ENCODE measurements at regions of chr20 and their contacts with region 1.

Region 1: GRCh38 chr20:48550610-48551195 is 277.1 kb downstream of the PREX1 start:
- DNase-seq: no peak
- H3K4me3 ChIP-seq: no peak overlapping the region
- CTCF ChIP-seq: no peak
- POLR2A ChIP-seq: no peak

Region 2: GRCh38 chr20:47821481-47822439 is 728.9 kb before region 1 on chr20:
- intact Hi-C with region 1: loop called (anchors 5 kb)
- DNase-seq: no peak
- H3K4me3 ChIP-seq: no peak overlapping the region
- CTCF ChIP-seq: no peak
- POLR2A ChIP-seq: no peak

Region 3: GRCh38 chr20:49288784-49289696 is 738.3 kb after region 1 on chr20:
- intact Hi-C with region 1: no loop called
- DNase-seq: no peak
- H3K4me3 ChIP-seq: no peak overlapping the region
- CTCF ChIP-seq: no peak
- POLR2A ChIP-seq: no peak